PC-9 (cell line): ENCODE measurements at regions of chr1 and their contacts with region 1.

Region 1: DNA sequence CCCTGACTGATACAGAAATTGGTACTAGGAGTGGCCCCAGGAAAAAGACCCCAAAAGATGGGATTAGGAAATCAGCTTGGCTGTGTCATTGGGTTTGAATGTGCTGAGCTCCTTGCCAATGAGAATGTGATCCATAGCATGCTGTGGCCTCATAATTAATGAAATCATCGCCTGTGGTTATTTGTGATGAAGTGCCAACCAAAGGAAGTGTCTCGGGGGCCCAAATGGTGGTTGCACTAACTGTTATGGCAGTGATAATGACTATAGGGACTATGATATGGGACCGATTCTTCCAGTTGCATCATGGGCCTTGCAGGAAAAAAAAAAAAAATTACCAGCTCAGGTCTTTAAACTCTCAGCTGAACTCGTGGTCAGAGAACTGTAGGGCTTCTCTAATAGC is 15.4 kb upstream of the ZDHHC18 start:
- DNase-seq: no peak
- H3K4me3 ChIP-seq: no peak overlapping the region
- H3K27ac ChIP-seq: no peak overlapping the region
- H3K4me1 ChIP-seq: 0 out of 2 replicates have a peak, but pooled peaks cover 4% of the 10 kb centered on the region
- H3K27me3 ChIP-seq: no peaks in the 10 kb centered on the region
- CTCF ChIP-seq: no peak

Region 2: DNA sequence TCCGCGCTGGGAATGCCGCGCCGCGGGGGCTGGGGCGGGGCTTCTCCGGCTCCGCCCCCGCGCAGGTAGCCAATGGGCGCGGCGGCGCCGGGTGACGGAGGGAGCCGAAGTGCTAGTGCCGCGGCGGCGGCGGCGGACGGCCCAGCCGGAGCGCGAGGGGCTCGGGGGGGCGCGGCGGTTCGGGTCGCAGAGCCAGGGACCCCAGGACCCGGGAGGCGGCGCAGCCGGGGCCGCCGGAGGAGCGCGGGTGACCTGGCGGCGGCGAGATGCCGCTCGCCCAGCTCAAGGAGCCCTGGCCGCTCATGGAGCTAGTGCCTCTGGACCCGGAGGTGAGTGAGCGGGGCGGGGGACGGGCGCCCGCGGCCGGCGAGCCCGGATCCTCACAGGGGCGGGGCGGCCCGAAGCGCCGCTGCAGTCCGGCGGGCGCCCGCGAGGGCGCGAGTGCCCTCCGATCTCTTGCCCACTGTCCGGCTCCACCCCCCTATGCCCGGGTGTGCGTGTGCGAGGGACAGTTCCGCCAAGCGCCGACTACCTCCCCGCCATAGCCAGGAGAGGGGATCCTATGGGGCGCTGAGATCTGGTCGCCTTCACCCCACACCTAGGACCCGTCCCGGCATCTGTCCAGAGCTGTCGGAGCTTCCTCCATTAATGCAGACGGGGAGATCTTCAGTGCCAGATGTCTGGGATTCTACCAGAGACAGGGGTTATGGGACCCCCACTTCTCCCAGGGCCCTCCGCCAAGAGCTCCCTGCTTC is 281.2 kb before region 1 on chr1 and contains the start of gene RPS6KA1:
- CTCF ChIA-PET with region 1: no interaction called
- POLR2A ChIA-PET with region 1: interaction called, 14 read pairs
- intact Hi-C with region 1: no loop called
- DNase-seq: peak in 1 of 2 experiments; percentile 73
- H3K4me3 ChIP-seq: peak within 1 kb of the TSS; percentile 80
- H3K27ac ChIP-seq: peak within 1 kb of the TSS; percentile 65
- H3K4me1 ChIP-seq: peaks cover 18% of the 10 kb centered on the region
- H3K27me3 ChIP-seq: no peaks in the 10 kb centered on the region
- CTCF ChIP-seq: no peak
- total RNA-seq, gene RPS6KA1: 60.5 and 68.5 TPM in 2 replicates

Region 3: GRCh38 chr1:26787706-26788514 is 23.1 kb before region 1 on chr1 and contains the start of gene PIGV:
- CTCF ChIA-PET with region 1: interaction called, 5 read pairs
- POLR2A ChIA-PET with region 1: interaction called, 13 read pairs
- intact Hi-C with region 1: no loop called
- DNase-seq: peak in 1 of 2 experiments; percentile 84
- H3K4me3 ChIP-seq: peak within 1 kb of the TSS; percentile 93
- H3K27ac ChIP-seq: peak within 1 kb of the TSS; percentile 92
- H3K4me1 ChIP-seq: peaks cover 52% of the 10 kb centered on the region
- H3K27me3 ChIP-seq: no peaks in the 10 kb centered on the region
- CTCF ChIP-seq: no peak
- total RNA-seq, gene PIGV: 30.8 and 31.9 TPM in 2 replicates

Region 4: GRCh38 chr1:26826261-26827105 is 15.4 kb after region 1 on chr1 and contains the start of gene ZDHHC18:
- CTCF ChIA-PET with region 1: interaction called, 10 read pairs
- POLR2A ChIA-PET with region 1: interaction called, 9 read pairs
- intact Hi-C with region 1: no loop called
- DNase-seq: peak in 1 of 2 experiments; percentile 70
- H3K4me3 ChIP-seq: peak within 1 kb of the TSS; percentile 62; the same call in 1 of the 2 replicates
- H3K27ac ChIP-seq: peak within 1 kb of the TSS; percentile 94
- H3K4me1 ChIP-seq: peaks cover 34% of the 10 kb centered on the region
- H3K27me3 ChIP-seq: no peaks in the 10 kb centered on the region
- CTCF ChIP-seq: no peak; the same call in 1 of the 2 replicates
- total RNA-seq, gene ZDHHC18: 27.2 and 36.1 TPM in 2 replicates

Region 5: GRCh38 chr1:26874896-26875295 is 63.8 kb after region 1 on chr1:
- CTCF ChIA-PET with region 1: no interaction called
- POLR2A ChIA-PET with region 1: no interaction called
- intact Hi-C with region 1: loop called (anchors 2 kb)
- DNase-seq: no peak
- H3K4me3 ChIP-seq: no peak overlapping the region
- H3K27ac ChIP-seq: peak overlapping the region; percentile 28
- H3K4me1 ChIP-seq: peaks cover 43% of the 10 kb centered on the region
- H3K27me3 ChIP-seq: no peaks in the 10 kb centered on the region
- CTCF ChIP-seq: no peak

Region 6: GRCh38 chr1:26889551-26890466 is 78.8 kb after region 1 on chr1 and contains the start of gene GPN2:
- CTCF ChIA-PET with region 1: no interaction called
- POLR2A ChIA-PET with region 1: interaction called, 13 read pairs
- intact Hi-C with region 1: no loop called
- DNase-seq: peak; percentile 63 to 65
- H3K4me3 ChIP-seq: peak within 1 kb of the TSS; percentile 65
- H3K27ac ChIP-seq: peak within 1 kb of the TSS; percentile 62
- H3K4me1 ChIP-seq: 0 out of 2 replicates have a peak, but pooled peaks cover 10% of the 10 kb centered on the region
- H3K27me3 ChIP-seq: no peaks in the 10 kb centered on the region
- CTCF ChIP-seq: no peak
- total RNA-seq, gene GPN2: 23.8 and 30.6 TPM in 2 replicates